ENCODE measurements at regions of chr7 and their contacts with region 1.

Region 1: DNA sequence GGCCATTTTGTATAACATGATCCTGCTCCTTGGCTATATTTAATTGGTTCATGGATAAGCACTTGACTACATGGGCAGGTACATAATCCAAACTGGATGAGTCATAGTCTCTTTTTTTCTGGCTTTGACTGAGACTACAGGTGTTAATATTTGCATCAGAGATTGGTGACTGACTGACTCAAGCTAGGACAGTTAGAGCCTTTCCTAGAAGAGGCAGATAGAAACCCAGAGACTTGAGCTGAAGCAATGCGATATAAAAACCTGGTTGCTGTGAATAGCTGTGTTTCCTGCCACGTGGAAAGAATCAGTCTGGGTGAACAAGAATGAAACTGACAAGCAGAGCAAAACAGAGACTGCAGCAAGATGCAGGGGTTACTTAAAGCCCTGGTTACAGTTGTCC is 81.0 kb downstream of the SAMD9 start:
- DNase-seq: peak; percentile 53
- H3K4me3 Mint-ChIP-seq: no peak overlapping the region
- H3K27ac Mint-ChIP-seq: peak overlapping the region; percentile 85
- H3K4me1 Mint-ChIP-seq: peaks cover 50% of the 10 kb centered on the region
- H3K27me3 Mint-ChIP-seq: no peaks in the 10 kb centered on the region

Region 2: GRCh38 chr7:92590711-92591310 is 446.0 kb before region 1 on chr7:
- intact Hi-C with region 1: loop called (anchors 5 kb)
- DNase-seq: no peak
- H3K4me3 Mint-ChIP-seq: peak overlapping the region; percentile 92
- H3K27ac Mint-ChIP-seq: no peak overlapping the region
- H3K4me1 Mint-ChIP-seq: peaks cover 37% of the 10 kb centered on the region
- H3K27me3 Mint-ChIP-seq: peaks cover 5% of the 10 kb centered on the region

Region 3: GRCh38 chr7:92854501-92855238 is 182.1 kb before region 1 on chr7:
- intact Hi-C with region 1: loop called (anchors 1 kb)
- DNase-seq: no peak
- H3K4me3 Mint-ChIP-seq: peak overlapping the region; percentile 4
- H3K27ac Mint-ChIP-seq: peak overlapping the region; percentile 89
- H3K4me1 Mint-ChIP-seq: peaks cover 17% of the 10 kb centered on the region
- H3K27me3 Mint-ChIP-seq: no peaks in the 10 kb centered on the region

Region 4: GRCh38 chr7:92968502-92968901 is 68.3 kb before region 1 on chr7:
- intact Hi-C with region 1: loop called (anchors 2 kb)
- DNase-seq: no peak
- H3K4me3 Mint-ChIP-seq: no peak overlapping the region
- H3K27ac Mint-ChIP-seq: no peak overlapping the region
- H3K4me1 Mint-ChIP-seq: peaks cover 9% of the 10 kb centered on the region
- H3K27me3 Mint-ChIP-seq: peaks cover 2% of the 10 kb centered on the region

Region 5: GRCh38 chr7:93025389-93025788 is 11.4 kb before region 1 on chr7:
- intact Hi-C with region 1: no loop called
- DNase-seq: no peak
- H3K4me3 Mint-ChIP-seq: no peak overlapping the region
- H3K27ac Mint-ChIP-seq: peak overlapping the region; percentile 33
- H3K4me1 Mint-ChIP-seq: peaks cover 35% of the 10 kb centered on the region
- H3K27me3 Mint-ChIP-seq: no peaks in the 10 kb centered on the region

Measured in activated T-helper 1 cell treated with anti-CD3 and anti-CD28 coated beads, Interleukin-12 subunit alpha, Interleukin-12 subunit beta, Interleukin-2, Interleukin-4 antibody, amounts not matched to agents 30 ng/mL and 10 ng/mL and 1 ng/mL, durations not matched to agents 14 hours and 24 hours and 36 hours (primary cell).